ENCODE measurements at regions of chr5 and their contacts with region 1.

Region 1: DNA sequence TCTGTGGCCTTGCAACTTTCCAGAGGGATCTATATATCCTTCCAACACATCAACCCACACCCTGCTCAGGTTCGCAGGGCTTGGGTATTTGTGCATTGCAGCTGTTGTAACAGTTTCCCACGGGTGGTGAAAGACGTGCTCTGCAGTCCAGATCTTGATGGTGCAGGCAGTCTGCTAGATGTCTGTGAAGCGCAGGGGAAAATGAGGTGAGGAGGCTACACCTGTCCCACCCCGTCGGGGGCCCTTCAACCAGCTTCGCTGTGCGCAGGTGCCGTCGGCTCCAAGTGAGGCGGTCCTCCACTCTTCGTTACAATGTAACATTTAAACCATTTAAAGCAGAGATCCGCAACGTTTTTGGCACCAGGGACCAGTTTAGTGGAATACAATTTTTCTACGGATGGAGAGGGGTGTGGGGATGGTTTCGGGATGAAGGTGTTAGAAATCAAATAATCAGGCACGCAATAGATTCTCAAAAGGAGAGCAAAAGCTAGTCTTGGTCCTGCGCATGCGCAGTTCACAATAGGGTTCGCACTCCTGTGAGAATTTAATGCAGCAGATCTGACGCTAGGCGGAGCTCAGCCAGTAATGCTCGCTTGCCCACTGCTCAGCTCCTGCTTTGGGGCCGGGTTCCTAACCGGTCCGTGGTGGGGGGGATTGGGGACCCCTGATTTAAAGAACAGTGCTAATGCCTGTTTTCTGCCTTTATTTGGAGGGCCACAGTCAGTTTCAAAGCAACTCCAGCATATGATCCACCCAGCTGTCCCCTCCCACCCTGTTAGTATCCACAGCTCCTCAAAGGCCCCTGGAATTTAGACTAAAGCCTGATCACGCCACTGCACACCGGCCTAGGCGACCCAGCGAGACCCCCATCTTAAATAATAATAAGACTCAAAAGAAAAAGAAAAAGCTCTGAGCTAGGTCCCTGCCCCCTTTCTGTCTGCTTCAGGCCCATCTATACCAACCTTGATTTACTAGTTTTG is 97.1 kb upstream of the SELENOP start:
- DNase-seq: peak; percentile 83 to 89
- ATAC-seq: peak; percentile 87 to 94
- H3K4me3 ChIP-seq: peak overlapping the region; percentile 42
- H3K27ac ChIP-seq: peak overlapping the region; percentile 32 to 64; a peak in 4 of 6 replicates
- H3K4me1 ChIP-seq: peaks cover 4% of the 10 kb centered on the region; the same call in 1 of the 3 replicates
- CTCF ChIP-seq: peak; percentile 88
- EP300 ChIP-seq: no peak
- POLR2A ChIP-seq: no peak
- RAD21 ChIP-seq: peak; percentile 73 to 80

Region 2: DNA sequence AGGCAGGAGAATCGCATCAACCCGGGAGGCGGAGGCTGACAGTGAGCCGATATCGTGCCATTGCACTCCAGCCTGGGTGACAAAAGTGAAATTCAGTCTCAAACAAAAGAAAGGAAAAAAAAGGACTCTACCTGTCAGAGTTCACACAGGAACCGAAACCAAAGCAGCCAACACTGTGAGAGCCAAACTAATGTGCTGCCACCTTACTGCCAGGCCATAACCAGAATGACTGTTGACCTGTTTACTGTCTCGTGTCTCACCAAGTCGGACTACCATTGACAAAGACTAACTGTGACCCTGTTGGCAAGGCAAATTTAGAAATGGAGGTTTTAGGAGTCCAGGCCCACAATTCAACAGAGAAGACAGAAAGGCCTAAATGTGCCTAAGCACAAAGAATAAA is 18.9 kb after region 1 on chr5:
- CTCF ChIA-PET with region 1: interaction called, 20 read pairs
- POLR2A ChIA-PET with region 1: no interaction called
- DNase-seq: no peak
- ATAC-seq: no peak
- H3K4me3 ChIP-seq: no peak overlapping the region
- H3K27ac ChIP-seq: no peak overlapping the region
- H3K4me1 ChIP-seq: no peaks in the 10 kb centered on the region
- CTCF ChIP-seq: no peak
- EP300 ChIP-seq: no peak
- POLR2A ChIP-seq: no peak
- RAD21 ChIP-seq: no peak

Region 3: GRCh38 chr5:42970636-42971559 is 62.1 kb after region 1 on chr5:
- CTCF ChIA-PET with region 1: interaction called, 56 read pairs
- POLR2A ChIA-PET with region 1: interaction called, 3 read pairs
- DNase-seq: peak in 1 of 2 experiments; percentile 48
- ATAC-seq: peak; percentile 24 to 87; a peak in 3 of 6 replicates
- H3K4me3 ChIP-seq: no peak overlapping the region
- H3K27ac ChIP-seq: no peak overlapping the region
- H3K4me1 ChIP-seq: no peaks in the 10 kb centered on the region
- CTCF ChIP-seq: peak; percentile 23; the same call in 1 of the 3 replicates
- EP300 ChIP-seq: no peak
- POLR2A ChIP-seq: no peak
- RAD21 ChIP-seq: peak; percentile 61 to 73

Region 4: DNA sequence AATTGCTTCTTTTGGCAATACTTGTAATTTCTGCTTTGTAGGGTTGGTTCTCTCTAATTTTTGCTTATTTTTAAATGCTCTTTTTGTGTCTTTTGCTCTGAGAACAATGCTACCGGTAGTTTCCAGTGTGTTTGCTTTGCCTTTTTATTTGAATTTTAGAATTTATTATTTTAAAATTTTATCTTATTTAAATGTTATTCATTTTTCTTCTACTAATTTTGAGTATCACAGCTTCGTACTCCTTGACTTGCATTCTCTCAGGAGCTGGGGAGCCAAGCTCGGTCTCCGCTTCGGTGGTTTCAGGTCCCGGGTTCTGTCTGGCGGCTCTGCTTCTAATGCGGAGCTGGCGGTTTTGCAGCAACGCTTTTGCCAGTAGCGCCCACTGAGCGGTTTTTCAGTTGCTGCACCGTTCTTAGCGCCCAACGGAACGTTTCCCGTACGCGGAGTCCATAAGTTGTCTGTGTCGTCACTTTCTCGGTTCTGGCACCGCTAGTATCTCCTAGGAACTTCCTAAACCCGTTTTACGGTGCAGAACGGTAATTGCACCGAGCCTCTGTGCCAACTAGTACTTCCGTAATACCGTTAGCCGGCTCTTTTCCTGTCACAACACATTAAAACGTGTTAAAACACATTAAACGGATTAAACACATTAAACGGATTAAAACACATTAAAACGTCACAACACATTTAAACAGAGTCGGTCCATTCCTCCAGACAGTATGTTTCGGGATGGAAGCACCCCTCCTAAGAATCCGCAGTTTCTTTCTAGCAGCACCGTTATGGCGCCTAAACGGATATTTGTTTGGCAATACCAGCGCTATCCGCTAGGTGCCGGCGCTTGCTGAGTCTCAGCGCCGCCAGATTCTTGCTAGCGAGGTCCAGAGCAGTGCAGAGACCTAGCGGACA is 85.7 kb after region 1 on chr5:
- CTCF ChIA-PET with region 1: interaction called, 132 read pairs
- POLR2A ChIA-PET with region 1: interaction called, 5 read pairs
- DNase-seq: peak; percentile 64 to 94
- ATAC-seq: peak; percentile 69 to 82
- H3K4me3 ChIP-seq: peak overlapping the region; percentile 64
- H3K27ac ChIP-seq: peak overlapping the region; percentile 87 to 94
- H3K4me1 ChIP-seq: peaks cover 24% of the 10 kb centered on the region
- CTCF ChIP-seq: peak; percentile 67
- EP300 ChIP-seq: no peak
- POLR2A ChIP-seq: no peak
- RAD21 ChIP-seq: peak; percentile 67 to 69

Region 5: DNA sequence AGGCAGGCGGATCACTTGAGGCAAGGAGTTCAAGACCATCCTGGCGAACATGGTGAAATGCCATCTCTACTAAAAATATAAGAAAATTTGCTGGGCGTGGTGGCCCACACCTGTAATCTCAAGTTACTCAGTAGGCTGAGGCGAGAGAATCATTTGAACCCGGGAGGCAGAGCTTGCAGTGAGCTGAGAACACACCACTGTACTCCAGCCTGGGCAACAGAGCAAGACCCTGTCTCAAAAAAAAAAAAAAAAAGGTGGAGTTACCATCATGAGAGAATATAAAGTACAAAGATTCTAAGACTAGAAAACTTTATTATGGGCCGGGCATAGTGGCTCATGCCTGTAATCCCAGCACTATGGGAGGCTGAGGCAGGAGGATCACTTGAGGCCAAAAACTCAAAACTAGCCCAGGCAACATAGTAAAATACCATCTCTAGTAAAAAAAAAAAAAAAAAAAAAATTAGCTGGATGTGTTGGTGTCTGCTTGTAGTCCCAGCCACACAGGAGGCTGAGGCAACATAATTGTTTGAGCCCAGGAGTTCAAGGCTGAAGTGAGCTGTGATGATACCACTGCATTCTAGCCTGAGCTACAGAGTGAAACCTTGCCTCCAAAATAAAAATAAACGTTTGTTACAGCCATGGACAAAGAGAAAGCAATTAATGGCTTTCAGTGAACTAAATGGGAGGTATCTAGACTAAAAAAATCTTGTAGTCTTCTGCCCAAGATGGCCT is 118.4 kb after region 1 on chr5:
- CTCF ChIA-PET with region 1: interaction called, 53 read pairs
- POLR2A ChIA-PET with region 1: no interaction called
- DNase-seq: no peak
- ATAC-seq: no peak
- H3K4me3 ChIP-seq: no peak overlapping the region
- H3K27ac ChIP-seq: no peak overlapping the region
- H3K4me1 ChIP-seq: no peaks in the 10 kb centered on the region
- CTCF ChIP-seq: no peak
- EP300 ChIP-seq: no peak
- POLR2A ChIP-seq: no peak
- RAD21 ChIP-seq: no peak

Region 6: GRCh38 chr5:43105369-43106289 is 196.8 kb after region 1 on chr5:
- CTCF ChIA-PET with region 1: interaction called, 37 read pairs
- POLR2A ChIA-PET with region 1: no interaction called
- DNase-seq: peak; percentile 80 to 98
- ATAC-seq: peak; percentile 96 to 98
- H3K4me3 ChIP-seq: peak overlapping the region; percentile 50
- H3K27ac ChIP-seq: peak overlapping the region; percentile 75 to 82
- H3K4me1 ChIP-seq: 0 out of 3 replicates have a peak, but pooled peaks cover 3% of the 10 kb centered on the region
- CTCF ChIP-seq: peak; percentile 100
- EP300 ChIP-seq: no peak
- POLR2A ChIP-seq: no peak
- RAD21 ChIP-seq: peak; percentile 83 to 84